Ascending aorta (tissue), 2 donors: ENCODE measurements at regions of chr10 and their contacts with region 1.

Region 1: DNA sequence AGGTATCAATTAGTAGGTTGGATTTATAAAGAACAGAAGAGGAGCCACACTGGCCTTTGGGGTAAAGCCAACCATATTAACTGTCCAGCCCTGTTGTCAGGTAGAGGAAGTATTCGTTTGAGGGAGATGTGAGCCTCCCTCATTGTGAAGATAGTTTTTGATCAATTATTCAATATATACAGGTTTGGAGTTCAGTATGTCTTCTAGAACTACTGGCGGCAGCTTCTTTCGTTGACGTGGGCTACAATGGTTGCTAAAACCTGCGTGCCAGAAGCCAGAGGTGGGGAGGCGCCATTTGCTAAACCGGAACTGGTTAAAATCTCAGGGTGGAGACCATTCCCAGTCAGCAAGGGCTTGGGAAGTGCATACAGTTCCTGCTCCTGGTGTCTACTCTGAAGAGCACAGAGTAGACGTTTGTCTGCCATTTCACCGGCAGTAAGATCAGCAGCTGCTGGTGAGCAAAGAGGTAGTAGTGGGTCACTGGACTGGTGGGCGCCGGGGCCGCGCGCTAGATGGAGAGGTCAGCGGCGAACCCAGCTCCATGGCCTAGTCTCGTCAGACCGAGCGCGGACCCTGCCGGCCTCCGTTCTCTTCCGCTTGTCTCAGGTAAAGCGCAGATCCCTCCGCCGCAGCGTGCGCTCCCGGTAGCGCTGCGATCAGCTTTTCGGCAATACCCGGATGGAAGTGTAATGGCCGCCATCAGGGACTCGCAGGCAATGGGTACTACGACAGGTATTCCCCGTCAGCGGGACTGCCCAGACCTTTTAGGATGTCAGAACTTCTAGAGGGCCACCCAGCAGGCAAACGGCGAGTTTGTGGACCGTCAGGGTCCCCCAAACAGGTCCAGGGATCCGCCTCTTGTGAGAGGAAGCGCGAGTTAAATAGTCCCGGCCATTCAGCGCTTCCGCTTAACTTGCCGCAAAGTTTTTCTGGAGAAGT is at the start of gene ZNF518A:
- DNase-seq: peak; percentile 47 to 94
- H3K4me3 ChIP-seq: peak within 1 kb of the TSS; percentile 90 to 95
- H3K27ac ChIP-seq: peak within 1 kb of the TSS; percentile 97 to 98
- H3K4me1 ChIP-seq: no peaks in the 10 kb centered on the region
- H3K27me3 ChIP-seq: no peaks in the 10 kb centered on the region
- CTCF ChIP-seq: no peak
- total RNA-seq, gene ZNF518A: 7.1 TPM

Region 2: GRCh38 chr10:96089670-96090462 is 39.8 kb before region 1 on chr10:
- intact Hi-C with region 1: loop called (anchors 1 kb)
- DNase-seq: peak; percentile 73 to 97
- H3K4me3 ChIP-seq: peak overlapping the region; percentile 68 to 88
- H3K27ac ChIP-seq: peak overlapping the region; percentile 79 to 92
- H3K4me1 ChIP-seq: peaks cover 0 to 3% of the 10 kb centered on the region in 2 donors
- H3K27me3 ChIP-seq: no peaks in the 10 kb centered on the region
- CTCF ChIP-seq: no peak

Region 3: GRCh38 chr10:96236090-96236478 is 106.4 kb after region 1 on chr10:
- intact Hi-C with region 1: no loop called
- DNase-seq: no peak
- H3K4me3 ChIP-seq: no peak overlapping the region
- H3K27ac ChIP-seq: no peak overlapping the region
- H3K4me1 ChIP-seq: no peaks in the 10 kb centered on the region
- H3K27me3 ChIP-seq: no peaks in the 10 kb centered on the region
- CTCF ChIP-seq: no peak